ENCODE measurements at regions of chr10 and their contacts with region 1.

Region 1: GRCh38 chr10:84845624-84846261 is 517.4 kb downstream of the CCSER2 start:
- DNase-seq: no peak

Region 2: GRCh38 chr10:85851325-85851724 is 1005.6 kb after region 1 on chr10:
- intact Hi-C with region 1: loop called in 1 of 2 experiments (anchors 10 kb)
- DNase-seq: no peak